ENCODE measurements at regions of chr2 and their contacts with region 1.

Region 1: DNA sequence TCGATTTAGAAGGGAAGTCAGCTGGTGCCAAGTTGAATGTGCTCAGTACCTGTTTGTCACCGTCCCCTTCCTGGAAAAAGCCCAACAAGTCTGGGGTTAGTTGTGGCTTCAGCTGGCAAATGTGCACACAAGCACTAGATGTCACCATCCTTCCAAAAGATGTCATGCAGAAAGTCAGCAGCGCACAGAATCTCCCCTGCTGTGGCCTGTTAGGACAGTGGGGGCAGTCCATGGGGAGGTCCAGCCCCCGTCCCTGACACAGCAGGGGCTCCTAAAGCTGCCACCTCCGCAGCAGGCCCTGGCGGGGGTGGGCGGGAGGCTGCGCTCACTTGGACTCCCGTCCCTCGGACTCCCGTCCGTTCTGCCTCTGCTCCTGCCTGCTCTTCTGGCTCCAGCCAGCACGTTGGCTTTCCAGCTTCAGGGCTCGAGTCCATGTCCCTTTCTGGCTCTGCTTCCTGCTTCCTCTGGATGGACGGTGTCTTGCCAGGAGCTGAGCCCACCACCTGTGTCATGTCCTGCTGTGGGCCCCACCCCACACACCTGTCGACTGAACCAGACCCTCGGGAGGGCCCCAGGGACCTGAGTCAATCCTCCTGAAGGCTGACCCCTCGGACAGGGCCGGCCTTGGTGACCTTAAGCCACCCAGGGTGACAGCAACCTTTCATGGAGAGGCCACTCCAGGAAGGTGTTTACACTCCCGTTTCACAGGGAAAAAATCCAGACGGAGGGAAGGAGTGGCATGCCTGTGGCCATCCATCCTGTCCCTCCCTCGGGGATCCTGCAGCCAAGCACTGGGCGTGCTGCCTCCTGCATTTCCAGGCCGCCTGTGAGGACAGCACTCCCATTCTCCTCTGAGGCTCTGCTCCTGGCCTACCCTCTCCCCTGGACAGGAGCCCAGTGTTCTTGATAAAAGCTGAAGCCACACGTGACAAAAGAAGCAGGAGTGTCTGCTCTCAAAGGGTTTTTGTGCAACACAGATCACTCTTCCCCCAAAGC is 8.5 kb downstream of the RAB17 start:
- DNase-seq: peak; percentile 77
- ATAC-seq: peak; percentile 91
- H3K4me3 Mint-ChIP-seq: no peak overlapping the region
- H3K27ac Mint-ChIP-seq: peak overlapping the region; percentile 7
- H3K4me1 Mint-ChIP-seq: peaks cover 6% of the 10 kb centered on the region
- H3K27me3 Mint-ChIP-seq: no peaks in the 10 kb centered on the region

Region 2: DNA sequence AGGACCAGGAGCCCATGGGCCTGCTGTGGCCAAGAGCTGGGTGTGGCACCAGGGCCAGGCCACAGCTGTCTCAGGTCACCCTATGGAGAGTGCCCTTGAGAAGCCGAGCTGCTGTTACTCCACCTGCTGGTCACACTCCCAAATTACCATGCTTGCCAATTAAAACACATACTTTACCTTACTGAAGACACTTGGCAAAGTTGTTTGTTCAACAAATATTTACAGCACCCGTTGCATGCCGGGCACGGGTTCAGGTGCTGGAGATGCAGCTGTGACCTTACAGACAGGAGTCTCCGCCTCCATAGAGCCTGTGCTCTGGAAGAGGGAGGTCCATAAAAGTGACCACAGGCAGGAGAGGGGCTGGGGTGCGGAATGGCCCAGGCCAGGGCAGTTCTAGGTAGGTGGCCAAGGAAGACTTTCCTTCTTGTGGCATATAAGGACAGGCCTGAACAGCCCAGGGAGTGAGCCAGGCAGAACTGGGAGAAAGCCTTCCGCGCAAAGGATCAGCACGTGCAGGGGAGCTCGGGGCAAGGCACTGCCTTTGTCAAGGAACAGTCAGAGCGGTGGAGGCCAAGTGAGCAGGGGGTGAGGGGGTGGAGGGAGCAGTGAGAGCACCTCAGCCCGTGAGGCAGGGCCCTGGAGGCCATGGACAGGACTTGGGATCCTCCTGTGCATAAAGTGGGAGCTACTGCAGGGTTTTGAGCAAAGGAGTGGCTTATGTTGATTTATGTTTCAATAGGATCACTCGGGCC is 192.9 kb after region 1 on chr2:
- CTCF ChIA-PET with region 1: interaction called, 12 read pairs
- POLR2A ChIA-PET with region 1: no interaction called
- DNase-seq: peak; percentile 65
- ATAC-seq: peak; percentile 79
- H3K4me3 Mint-ChIP-seq: no peak overlapping the region
- H3K27ac Mint-ChIP-seq: peak overlapping the region; percentile 39
- H3K4me1 Mint-ChIP-seq: no peaks in the 10 kb centered on the region
- H3K27me3 Mint-ChIP-seq: no peaks in the 10 kb centered on the region

Measured in activated CD8-positive, alpha-beta T cell treated with anti-CD3 and anti-CD28 coated beads, Interleukin-2, amount 10 ng/mL, durations not matched to agents 7 days and 5 days (primary cell).